ENCODE measurements at regions of chr3 and their contacts with region 1.

Region 1: DNA sequence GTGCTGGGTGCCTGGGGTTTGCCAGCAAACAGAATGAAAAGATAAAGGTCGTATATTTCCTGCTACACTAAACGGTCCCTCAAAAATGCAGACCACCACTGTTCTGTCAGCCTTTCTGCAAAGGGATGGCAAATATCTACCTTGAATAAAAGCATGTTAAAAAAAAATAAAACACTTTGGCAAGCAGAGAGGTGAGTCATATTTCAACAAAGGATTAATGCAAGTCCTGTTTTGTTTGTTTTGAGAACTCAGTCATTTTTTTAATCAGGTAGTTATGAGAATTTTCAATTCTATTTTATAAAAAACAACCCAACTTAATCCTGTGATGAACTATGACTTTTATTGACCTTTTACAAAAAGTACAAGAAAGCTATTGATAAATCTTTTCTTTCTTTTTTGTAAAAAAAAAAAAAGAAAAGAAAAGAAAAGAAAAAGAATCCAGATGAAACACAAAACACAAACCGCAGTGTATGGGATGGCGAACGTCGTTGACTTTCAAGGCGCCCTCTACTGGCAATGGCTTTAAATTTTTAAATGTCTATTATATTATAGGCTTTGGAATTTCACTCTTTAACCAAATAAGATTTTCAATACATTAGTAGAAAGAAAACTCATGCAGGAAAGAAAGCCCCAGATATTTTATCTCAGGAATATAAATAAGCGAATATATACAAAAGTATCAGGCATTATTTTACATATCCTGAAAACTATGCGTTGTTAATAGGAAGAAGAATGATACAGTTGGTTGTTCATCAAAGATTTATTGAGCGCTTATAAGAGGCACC is 87.8 kb downstream of the NCEH1 start:
- DNase-seq: peak; percentile 88
- H3K4me3 ChIP-seq: peak overlapping the region in 1 of 3 experiments; percentile 26
- H3K27ac ChIP-seq: peak overlapping the region; percentile 42
- H3K4me1 ChIP-seq: peaks cover 16% of the 10 kb centered on the region
- H3K27me3 ChIP-seq: no peaks in the 10 kb centered on the region
- CTCF ChIP-seq: peak; percentile 50 to 53
- POLR2A ChIP-seq: no peak

Region 2: GRCh38 chr3:172607305-172608121 is 15.6 kb before region 1 on chr3:
- CTCF ChIA-PET with region 1: interaction called, 25 read pairs
- POLR2A ChIA-PET with region 1: no interaction called
- dilution Hi-C with region 1: no loop called
- intact Hi-C with region 1: no loop called
- DNase-seq: peak; percentile 94
- H3K4me3 ChIP-seq: no peak overlapping the region
- H3K27ac ChIP-seq: peak overlapping the region; percentile 90
- H3K4me1 ChIP-seq: peaks cover 27% of the 10 kb centered on the region
- H3K27me3 ChIP-seq: no peaks in the 10 kb centered on the region
- CTCF ChIP-seq: no peak
- POLR2A ChIP-seq: no peak

Measured in endothelial cell of umbilical vein (primary cell).